ENCODE measurements at regions of chr6 and their contacts with region 1.

Region 1: GRCh38 chr6:134247231-134247833 is 70.6 kb downstream of the SGK1 start:
- DNase-seq: peak; percentile 26 to 94 (median 79)
- ATAC-seq: peak; percentile 94 to 98 (median 96)
- H3K4me3 ChIP-seq: peak overlapping the region in 1 of 2 donors; percentile 23
- H3K4me3 Mint-ChIP-seq: peak overlapping the region; percentile 31 to 62 (median 38)
- H3K27ac ChIP-seq: peak overlapping the region; percentile 68
- H3K27ac Mint-ChIP-seq: peak overlapping the region; percentile 84 to 92
- H3K4me1 ChIP-seq: peaks cover 46 to 50% of the 10 kb centered on the region in 2 experiments
- H3K4me1 Mint-ChIP-seq: peaks cover 58 to 66% (median 63%) of the 10 kb centered on the region in 3 donors
- H3K27me3 ChIP-seq: no peaks in the 10 kb centered on the region
- H3K27me3 Mint-ChIP-seq: no peaks in the 10 kb centered on the region

Region 2: DNA sequence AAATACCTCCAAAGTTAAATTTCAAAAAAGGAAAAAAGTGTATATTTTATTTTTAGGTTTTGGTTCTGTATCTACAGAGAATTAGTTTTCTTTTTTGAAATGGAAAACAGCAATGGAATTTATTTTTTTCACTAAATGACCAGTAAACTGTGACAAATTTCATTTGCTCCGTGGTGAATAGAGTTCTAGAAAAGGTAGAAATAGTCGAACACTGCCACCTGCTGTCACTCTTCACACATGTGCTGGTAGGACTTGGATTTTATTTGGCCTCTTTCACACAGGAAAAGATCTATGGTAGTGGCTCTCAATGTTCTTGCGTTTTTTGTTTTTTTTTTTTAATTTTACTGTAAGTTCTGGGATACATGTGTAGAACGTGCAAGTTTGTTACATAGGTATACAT is 693.7 kb before region 1 on chr6:
- CTCF ChIA-PET with region 1: interaction called in 1 of 2 experiments, 10 read pairs
- POLR2A ChIA-PET with region 1: no interaction called
- DNase-seq: peak in 9 of 35 experiments; percentile 1 to 54 (median 9)
- ATAC-seq: no peak
- H3K4me3 ChIP-seq: no peak overlapping the region
- H3K4me3 Mint-ChIP-seq: no peak overlapping the region
- H3K27ac ChIP-seq: no peak overlapping the region
- H3K27ac Mint-ChIP-seq: no peak overlapping the region
- H3K4me1 ChIP-seq: no peaks in the 10 kb centered on the region
- H3K4me1 Mint-ChIP-seq: no peaks in the 10 kb centered on the region
- H3K27me3 ChIP-seq: no peaks in the 10 kb centered on the region
- H3K27me3 Mint-ChIP-seq: peaks cover 1 to 8% of the 10 kb centered on the region in 2 donors

Region 3: DNA sequence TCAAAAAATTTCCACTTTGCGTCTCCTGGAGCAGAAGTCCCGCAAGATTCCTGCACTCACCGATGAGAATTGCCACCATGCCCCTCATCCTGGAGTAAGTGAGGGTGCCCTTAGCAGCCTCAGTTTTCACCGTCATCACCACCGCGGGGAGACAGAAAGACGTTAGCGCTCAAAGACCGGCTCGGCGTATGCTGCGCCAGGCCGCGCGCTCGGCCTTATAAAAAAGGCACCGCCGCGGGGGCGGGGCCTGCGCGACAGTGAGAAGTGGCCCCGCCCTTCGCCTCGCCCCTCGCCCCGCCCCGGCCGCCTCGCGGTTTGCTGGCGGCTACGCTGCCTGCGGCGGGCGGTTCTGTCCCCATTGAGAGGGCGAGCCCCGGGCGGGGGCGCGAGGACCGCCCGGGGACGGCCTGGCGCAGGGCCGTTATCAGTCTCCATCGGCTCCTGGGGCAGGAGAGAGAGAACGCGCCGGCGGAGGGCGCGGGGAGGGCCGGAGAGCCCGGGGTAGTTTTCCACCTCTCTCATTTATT is 72.6 kb before region 1 on chr6:
- CTCF ChIA-PET with region 1: interaction called in 1 of 2 experiments, 4 read pairs
- POLR2A ChIA-PET with region 1: interaction called in 1 of 2 experiments, 15 read pairs
- DNase-seq: peak; percentile 78 to 97 (median 92)
- ATAC-seq: peak; percentile 75 to 87 (median 80)
- H3K4me3 ChIP-seq: peak overlapping the region; percentile 66 to 78
- H3K4me3 Mint-ChIP-seq: peak overlapping the region; percentile 94 to 99 (median 97)
- H3K27ac ChIP-seq: peak overlapping the region; percentile 82
- H3K27ac Mint-ChIP-seq: peak overlapping the region; percentile 95 to 98
- H3K4me1 ChIP-seq: peaks cover 50 to 57% of the 10 kb centered on the region in 2 experiments
- H3K4me1 Mint-ChIP-seq: peaks cover 74 to 81% (median 75%) of the 10 kb centered on the region in 3 donors
- H3K27me3 ChIP-seq: no peaks in the 10 kb centered on the region
- H3K27me3 Mint-ChIP-seq: no peaks in the 10 kb centered on the region

Region 4: GRCh38 chr6:134267917-134268361 is 20.6 kb after region 1 on chr6:
- CTCF ChIA-PET with region 1: interaction called in 1 of 2 experiments, 10 read pairs
- POLR2A ChIA-PET with region 1: interaction called, 4 to 5 read pairs
- DNase-seq: no peak
- ATAC-seq: no peak
- H3K4me3 ChIP-seq: no peak overlapping the region
- H3K4me3 Mint-ChIP-seq: no peak overlapping the region
- H3K27ac ChIP-seq: no peak overlapping the region
- H3K27ac Mint-ChIP-seq: no peak overlapping the region
- H3K4me1 ChIP-seq: peaks cover 7 to 13% of the 10 kb centered on the region in 2 experiments
- H3K4me1 Mint-ChIP-seq: peaks cover 11 to 17% (median 15%) of the 10 kb centered on the region in 3 donors
- H3K27me3 ChIP-seq: no peaks in the 10 kb centered on the region
- H3K27me3 Mint-ChIP-seq: no peaks in the 10 kb centered on the region

Region 5: GRCh38 chr6:134508862-134509498 is 261.6 kb after region 1 on chr6:
- CTCF ChIA-PET with region 1: interaction called in 1 of 2 experiments, 12 read pairs
- POLR2A ChIA-PET with region 1: no interaction called
- DNase-seq: no peak
- ATAC-seq: no peak
- H3K4me3 ChIP-seq: no peak overlapping the region
- H3K4me3 Mint-ChIP-seq: no peak overlapping the region
- H3K27ac ChIP-seq: no peak overlapping the region
- H3K27ac Mint-ChIP-seq: no peak overlapping the region
- H3K4me1 ChIP-seq: no peaks in the 10 kb centered on the region
- H3K4me1 Mint-ChIP-seq: peaks cover 0 to 7% (median 6%) of the 10 kb centered on the region in 3 donors
- H3K27me3 ChIP-seq: no peaks in the 10 kb centered on the region
- H3K27me3 Mint-ChIP-seq: no peaks in the 10 kb centered on the region

Region 6: DNA sequence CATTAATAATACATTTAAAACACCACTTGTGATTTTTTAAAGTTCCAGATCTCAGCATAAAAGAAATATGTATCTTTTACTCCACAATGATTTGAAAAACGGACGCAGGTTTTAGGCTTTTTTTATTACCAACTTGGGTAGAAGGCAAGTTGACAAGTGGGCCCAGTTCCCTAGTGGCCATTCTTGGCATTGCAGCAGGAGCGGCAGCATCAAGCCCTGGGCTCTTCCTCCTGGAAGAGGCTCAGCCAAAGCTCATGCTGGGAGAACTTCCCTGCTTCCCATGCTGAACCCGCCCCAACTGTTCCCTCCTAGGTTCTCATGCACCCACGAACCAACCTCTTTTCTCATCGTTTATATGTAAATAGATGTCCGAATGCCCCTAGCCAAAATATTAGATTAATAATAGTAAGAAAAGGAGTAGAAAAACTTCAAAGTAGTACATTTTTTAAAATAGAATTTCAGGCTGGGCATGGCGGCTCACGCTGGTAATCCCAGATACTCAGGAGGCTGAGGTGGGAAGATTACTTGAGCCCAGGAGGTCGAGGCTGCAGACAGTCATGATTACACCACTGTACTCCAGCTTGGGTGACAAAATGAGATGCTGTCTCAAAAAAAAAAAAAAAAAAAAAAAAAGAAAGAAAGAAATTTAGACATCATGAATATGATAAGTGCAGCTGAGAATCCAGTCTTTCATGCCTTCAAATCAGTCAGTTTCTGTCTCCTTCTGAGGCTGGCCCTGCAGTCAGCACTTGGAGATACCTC is 915.5 kb after region 1 on chr6:
- CTCF ChIA-PET with region 1: no interaction called
- POLR2A ChIA-PET with region 1: interaction called in 1 of 2 experiments, 10 read pairs
- DNase-seq: peak in 15 of 35 experiments; percentile 11 to 64 (median 19)
- ATAC-seq: no peak
- H3K4me3 ChIP-seq: no peak overlapping the region
- H3K4me3 Mint-ChIP-seq: peak overlapping the region in 1 of 3 donors; percentile 6
- H3K27ac ChIP-seq: no peak overlapping the region
- H3K27ac Mint-ChIP-seq: peak overlapping the region; percentile 32 to 76
- H3K4me1 ChIP-seq: peaks cover 9 to 12% of the 10 kb centered on the region in 2 experiments
- H3K4me1 Mint-ChIP-seq: peaks cover 25 to 47% (median 27%) of the 10 kb centered on the region in 3 donors
- H3K27me3 ChIP-seq: peaks cover 0 to 3% of the 10 kb centered on the region in 2 experiments
- H3K27me3 Mint-ChIP-seq: no peaks in the 10 kb centered on the region